Esophagus muscularis mucosa (tissue), 4 donors: ENCODE measurements at regions of chr1 and their contacts with region 1.

Region 1: GRCh38 chr1:31959521-31960340 is 21.6 kb upstream of the PTP4A2 start:
- DNase-seq: no peak
- H3K4me3 ChIP-seq: no peak overlapping the region
- H3K27ac ChIP-seq: no peak overlapping the region
- H3K4me1 ChIP-seq: peaks cover 24 to 41% (median 28%) of the 10 kb centered on the region in 4 donors
- H3K27me3 ChIP-seq: no peaks in the 10 kb centered on the region
- CTCF ChIP-seq: no peak
- EP300 ChIP-seq: no peak
- POLR2A ChIP-seq: no peak

Region 2: DNA sequence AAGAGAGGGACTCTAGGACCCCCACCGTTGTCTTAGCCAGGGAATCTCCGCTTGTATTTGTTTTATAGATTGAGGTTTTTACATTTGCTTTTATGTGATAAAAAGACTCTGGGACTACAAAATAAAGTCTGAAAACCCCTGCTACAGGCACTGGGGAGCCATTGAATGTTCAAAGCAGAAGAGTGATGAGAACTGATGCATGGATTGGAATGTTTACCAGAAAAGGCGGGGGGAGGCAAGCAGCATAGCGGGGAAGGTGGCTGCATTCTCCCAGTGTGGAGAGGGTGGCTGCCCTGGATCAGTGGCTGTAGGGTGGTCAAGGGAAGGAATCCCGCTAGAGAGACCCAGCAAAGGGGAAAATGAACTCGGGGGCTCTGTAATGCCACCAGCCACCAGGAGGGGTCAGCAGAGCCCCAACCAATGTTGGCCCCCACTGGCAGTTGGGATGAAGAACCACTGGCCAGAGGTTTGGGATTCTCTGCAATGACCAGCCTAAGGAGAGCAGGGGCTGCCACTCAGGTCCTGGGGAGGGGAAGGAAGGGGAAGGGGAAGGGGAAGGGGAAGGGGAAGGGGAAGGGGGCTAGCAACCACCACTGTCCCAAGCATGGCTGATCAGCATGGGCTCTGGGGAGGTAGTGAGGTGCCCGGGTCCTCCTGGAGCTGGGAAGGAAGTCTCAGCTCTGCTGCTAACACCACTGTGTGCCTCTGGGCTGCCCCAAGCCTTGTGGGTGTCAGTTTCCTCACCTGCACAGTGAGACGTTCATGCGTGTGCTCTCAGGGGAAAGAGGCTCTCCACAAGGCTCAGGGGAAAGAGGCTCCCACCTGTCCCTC is 295.9 kb before region 1 on chr1:
- intact Hi-C with region 1: loop called (anchors 10 kb)
- DNase-seq: no peak
- H3K4me3 ChIP-seq: no peak overlapping the region
- H3K27ac ChIP-seq: peak overlapping the region in 1 of 4 donors; percentile 2
- H3K4me1 ChIP-seq: peaks cover 13 to 51% (median 38%) of the 10 kb centered on the region in 4 donors
- H3K27me3 ChIP-seq: no peaks in the 10 kb centered on the region
- CTCF ChIP-seq: peak; percentile 94 to 99 (median 98)
- EP300 ChIP-seq: no peak
- POLR2A ChIP-seq: no peak

Region 3: GRCh38 chr1:31762726-31763670 is 196.7 kb before region 1 on chr1:
- intact Hi-C with region 1: loop called (anchors 5 kb)
- DNase-seq: no peak
- H3K4me3 ChIP-seq: peak overlapping the region; percentile 59 to 66 (median 62)
- H3K27ac ChIP-seq: no peak overlapping the region
- H3K4me1 ChIP-seq: peaks cover 38 to 53% (median 44%) of the 10 kb centered on the region in 4 donors
- H3K27me3 ChIP-seq: peaks cover 0 to 37% (median 16%) of the 10 kb centered on the region in 4 donors
- CTCF ChIP-seq: peak; percentile 70 to 78 (median 72)
- EP300 ChIP-seq: no peak
- POLR2A ChIP-seq: no peak

Region 4: GRCh38 chr1:31815752-31816500 is 143.8 kb before region 1 on chr1 and contains the start of gene SPOCD1:
- intact Hi-C with region 1: loop called (anchors 5 kb)
- DNase-seq: no peak
- H3K4me3 ChIP-seq: peak within 1 kb of the TSS in 2 of 4 donors; percentile 7 to 25
- H3K27ac ChIP-seq: no peak within 1 kb of the TSS
- H3K4me1 ChIP-seq: peaks cover 0 to 7% (median 0%) of the 10 kb centered on the region in 4 donors
- H3K27me3 ChIP-seq: no peaks in the 10 kb centered on the region
- CTCF ChIP-seq: peak; percentile 53 to 67 (median 55)
- EP300 ChIP-seq: no peak
- POLR2A ChIP-seq: no peak
- total RNA-seq, gene SPOCD1: 0.17 to 0.19 (median 0.17) TPM in 3 of 4 donors, not detected in the other

Region 5: GRCh38 chr1:31926853-31927660 is 32.7 kb before region 1 on chr1:
- intact Hi-C with region 1: loop called (anchors 5 kb)
- DNase-seq: no peak
- H3K4me3 ChIP-seq: no peak overlapping the region
- H3K27ac ChIP-seq: peak overlapping the region in 1 of 4 donors; percentile 17
- H3K4me1 ChIP-seq: peaks cover 88 to 98% (median 92%) of the 10 kb centered on the region in 4 donors
- H3K27me3 ChIP-seq: no peaks in the 10 kb centered on the region
- CTCF ChIP-seq: no peak
- EP300 ChIP-seq: no peak
- POLR2A ChIP-seq: no peak

Region 6: GRCh38 chr1:32052887-32053286 is 93.2 kb after region 1 on chr1:
- intact Hi-C with region 1: no loop called
- DNase-seq: no peak
- H3K4me3 ChIP-seq: no peak overlapping the region
- H3K27ac ChIP-seq: no peak overlapping the region
- H3K4me1 ChIP-seq: peaks cover 0 to 8% (median 1%) of the 10 kb centered on the region in 4 donors
- H3K27me3 ChIP-seq: no peaks in the 10 kb centered on the region
- CTCF ChIP-seq: no peak
- EP300 ChIP-seq: no peak
- POLR2A ChIP-seq: no peak